A673 (cell line): ENCODE measurements at regions of chr18 and their contacts with region 1.

Region 1: GRCh38 chr18:37403100-37403781 is 162.4 kb downstream of the CELF4 start:
- DNase-seq: no peak
- H3K4me3 ChIP-seq: no peak overlapping the region
- H3K27ac ChIP-seq: no peak overlapping the region
- H3K4me1 ChIP-seq: no peaks in the 10 kb centered on the region
- H3K27me3 ChIP-seq: no peaks in the 10 kb centered on the region
- CTCF ChIP-seq: no peak

Region 2: GRCh38 chr18:36107477-36107876 is 1295.8 kb before region 1 on chr18:
- CTCF ChIA-PET with region 1: no interaction called
- POLR2A ChIA-PET with region 1: no interaction called
- intact Hi-C with region 1: no loop called
- DNase-seq: no peak
- H3K4me3 ChIP-seq: no peak overlapping the region
- H3K27ac ChIP-seq: no peak overlapping the region
- H3K4me1 ChIP-seq: no peaks in the 10 kb centered on the region
- H3K27me3 ChIP-seq: no peaks in the 10 kb centered on the region
- CTCF ChIP-seq: no peak

Region 3: GRCh38 chr18:37435996-37436395 is 32.8 kb after region 1 on chr18:
- CTCF ChIA-PET with region 1: no interaction called
- POLR2A ChIA-PET with region 1: no interaction called
- intact Hi-C with region 1: no loop called
- DNase-seq: no peak
- H3K4me3 ChIP-seq: no peak overlapping the region
- H3K27ac ChIP-seq: no peak overlapping the region
- H3K4me1 ChIP-seq: no peaks in the 10 kb centered on the region
- H3K27me3 ChIP-seq: peaks cover 8% of the 10 kb centered on the region
- CTCF ChIP-seq: no peak

Region 4: DNA sequence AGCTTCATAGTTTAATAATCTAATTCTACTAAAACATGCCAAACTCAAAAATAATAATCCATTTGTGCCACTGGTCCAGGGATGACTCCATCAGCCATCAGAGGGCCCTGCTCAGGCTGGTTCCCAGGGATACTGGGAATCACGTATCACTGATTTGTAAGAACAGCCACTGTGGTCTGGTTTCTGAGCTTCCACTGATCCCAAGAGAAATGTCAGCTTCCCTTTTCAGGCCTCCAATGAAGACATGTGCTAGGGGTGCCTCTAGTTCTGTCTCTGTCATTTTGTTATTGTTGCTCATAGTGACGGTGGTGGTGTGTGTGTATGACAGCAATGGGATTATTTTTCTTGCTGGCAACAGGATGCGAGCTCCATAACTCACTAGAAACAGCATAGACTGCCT is 79.2 kb after region 1 on chr18:
- CTCF ChIA-PET with region 1: no interaction called
- POLR2A ChIA-PET with region 1: interaction called, 26 read pairs
- intact Hi-C with region 1: no loop called
- DNase-seq: no peak
- H3K4me3 ChIP-seq: no peak overlapping the region
- H3K27ac ChIP-seq: no peak overlapping the region
- H3K4me1 ChIP-seq: no peaks in the 10 kb centered on the region
- H3K27me3 ChIP-seq: peaks cover 93% of the 10 kb centered on the region
- CTCF ChIP-seq: no peak